ENCODE measurements at regions of chr4 and their contacts with region 1.

Region 1: DNA sequence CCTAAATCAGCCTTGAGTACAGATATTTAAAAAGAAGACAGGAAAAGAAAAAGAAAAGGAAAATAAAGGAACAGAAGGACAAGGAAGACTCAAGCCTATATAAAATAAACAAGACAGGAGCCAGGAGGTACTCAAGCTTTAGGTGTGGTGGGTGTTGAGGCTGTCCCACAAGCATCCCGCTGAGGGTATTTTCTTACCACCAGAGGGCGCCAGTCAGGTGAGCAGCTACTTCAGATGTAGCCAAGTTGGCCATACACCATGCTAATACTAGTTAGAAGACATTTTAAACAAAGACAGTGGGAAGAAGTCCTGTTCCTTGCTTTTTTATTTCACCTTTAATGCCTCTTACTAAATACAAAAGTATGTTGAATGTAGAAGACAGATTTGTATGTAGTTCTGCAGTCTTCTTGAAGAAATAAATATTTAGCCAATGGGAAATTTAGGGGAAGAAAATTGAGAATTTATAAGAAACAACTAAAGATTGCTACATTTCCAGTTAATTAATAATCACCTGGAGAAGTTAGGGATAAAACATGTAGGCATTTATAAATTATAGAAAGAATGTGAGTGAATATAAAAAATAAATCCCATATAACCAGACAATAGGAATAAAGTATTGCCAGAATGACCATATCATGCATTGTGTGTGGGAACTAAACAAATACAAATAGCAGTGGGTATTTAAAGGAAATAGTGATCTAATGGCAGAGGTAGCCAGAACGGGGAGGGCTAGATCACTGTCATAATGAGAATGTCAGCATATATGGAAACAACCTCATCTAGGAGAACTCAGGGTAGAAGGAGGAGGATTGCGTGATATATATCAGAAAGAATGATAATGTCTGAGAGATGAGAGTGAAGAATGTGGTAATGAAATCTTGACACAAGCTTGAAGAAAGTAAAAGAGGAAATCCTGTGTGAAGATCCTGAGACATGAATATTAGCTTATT is 71.0 kb downstream of the MTHFD2L start:
- DNase-seq: peak; percentile 36 to 53
- H3K4me3 ChIP-seq: no peak overlapping the region
- H3K27ac ChIP-seq: peak overlapping the region; percentile 93; the same call in 1 of the 2 replicates
- H3K4me1 ChIP-seq: peaks cover 29% of the 10 kb centered on the region
- H3K27me3 ChIP-seq: no peaks in the 10 kb centered on the region
- CTCF ChIP-seq: peak; percentile 80

Region 2: GRCh38 chr4:74189331-74190043 is 39.5 kb before region 1 on chr4:
- CTCF ChIA-PET with region 1: no interaction called
- POLR2A ChIA-PET with region 1: no interaction called
- intact Hi-C with region 1: loop called (anchors 5 kb)
- DNase-seq: peak in 1 of 2 experiments; percentile 53
- H3K4me3 ChIP-seq: no peak overlapping the region
- H3K27ac ChIP-seq: no peak overlapping the region
- H3K4me1 ChIP-seq: no peaks in the 10 kb centered on the region
- H3K27me3 ChIP-seq: no peaks in the 10 kb centered on the region
- CTCF ChIP-seq: peak; percentile 69

Region 3: GRCh38 chr4:74283614-74284013 is 54.6 kb after region 1 on chr4:
- CTCF ChIA-PET with region 1: no interaction called
- POLR2A ChIA-PET with region 1: no interaction called
- intact Hi-C with region 1: loop called (anchors 1 kb)
- DNase-seq: peak; percentile 53 to 84
- H3K4me3 ChIP-seq: peak overlapping the region; percentile 13; the same call in 1 of the 2 replicates
- H3K27ac ChIP-seq: peak overlapping the region; percentile 81
- H3K4me1 ChIP-seq: peaks cover 18% of the 10 kb centered on the region
- H3K27me3 ChIP-seq: no peaks in the 10 kb centered on the region
- CTCF ChIP-seq: no peak

Region 4: GRCh38 chr4:74311696-74312313 is 82.8 kb after region 1 on chr4:
- CTCF ChIA-PET with region 1: interaction called, 11 read pairs
- POLR2A ChIA-PET with region 1: interaction called, 16 read pairs
- intact Hi-C with region 1: loop called (anchors 1 kb)
- DNase-seq: peak in 1 of 2 experiments; percentile 45
- H3K4me3 ChIP-seq: no peak overlapping the region
- H3K27ac ChIP-seq: no peak overlapping the region
- H3K4me1 ChIP-seq: no peaks in the 10 kb centered on the region
- H3K27me3 ChIP-seq: no peaks in the 10 kb centered on the region
- CTCF ChIP-seq: peak; percentile 69

Measured in PC-9 (cell line).